Mammary epithelial cell (primary cell): ENCODE measurements at regions of chr14 and their contacts with region 1.

Region 1: GRCh38 chr14:78130356-78130755 is 39.8 kb upstream of the NRXN3 start:
- DNase-seq: no peak
- H3K4me3 ChIP-seq: no peak overlapping the region
- H3K27ac ChIP-seq: no peak overlapping the region
- H3K4me1 ChIP-seq: no peaks in the 10 kb centered on the region
- H3K27me3 ChIP-seq: no peaks in the 10 kb centered on the region
- CTCF ChIP-seq: no peak

Region 2: DNA sequence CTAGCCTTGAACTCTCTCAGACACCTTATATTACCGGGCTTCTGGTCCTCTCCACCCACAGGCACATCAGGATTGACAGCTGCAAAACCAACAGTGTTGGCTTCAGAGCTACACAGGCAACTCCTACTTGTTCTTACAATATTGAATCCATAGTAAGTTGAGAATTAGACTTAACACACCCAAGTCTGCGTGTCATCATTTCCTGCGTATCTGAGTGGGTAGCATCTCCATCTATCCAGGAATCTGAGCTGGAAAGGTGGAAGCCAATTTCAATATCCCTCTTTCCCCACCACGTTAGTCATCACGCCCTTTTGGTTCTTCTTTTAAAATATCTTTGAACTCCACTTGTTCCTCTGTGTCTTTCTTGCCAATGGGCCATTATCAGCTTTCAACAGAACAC is 77.1 kb after region 1 on chr14:
- CTCF ChIA-PET with region 1: no interaction called
- dilution Hi-C with region 1: loop called (anchors 5 kb)
- in situ Hi-C with region 1: no loop called
- intact Hi-C with region 1: no loop called
- DNase-seq: no peak
- H3K4me3 ChIP-seq: no peak overlapping the region
- H3K27ac ChIP-seq: no peak overlapping the region
- H3K4me1 ChIP-seq: no peaks in the 10 kb centered on the region
- H3K27me3 ChIP-seq: no peaks in the 10 kb centered on the region
- CTCF ChIP-seq: no peak